Gastrocnemius medialis (tissue), 4 donors: ENCODE measurements at regions of chr7 and their contacts with region 1.

Region 1: DNA sequence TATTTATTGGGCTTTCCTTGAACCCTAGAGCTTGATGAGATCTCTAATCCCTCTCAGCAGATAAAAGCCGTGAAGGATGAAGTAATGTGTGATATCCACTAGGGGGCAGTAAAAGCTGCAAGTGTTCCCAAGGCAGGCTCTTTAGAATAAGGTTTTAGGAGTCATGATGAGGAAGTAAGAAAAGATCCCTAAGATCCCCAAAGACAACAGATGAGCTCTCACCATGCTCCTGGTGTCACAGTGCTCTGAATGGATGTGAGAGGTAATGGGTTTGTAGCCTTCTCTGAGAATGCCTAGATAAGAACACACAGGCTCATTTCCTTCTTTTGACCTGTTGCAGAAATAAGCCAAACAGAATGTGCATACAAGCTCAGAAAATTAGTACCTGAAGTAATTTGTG is 70.4 kb upstream of the ITPRID1 start:
- DNase-seq: no peak
- ATAC-seq: peak in 1 of 2 donors; percentile 53
- H3K4me3 ChIP-seq: no peak overlapping the region
- H3K27ac ChIP-seq: no peak overlapping the region
- H3K4me1 ChIP-seq: no peaks in the 10 kb centered on the region
- H3K27me3 ChIP-seq: no peaks in the 10 kb centered on the region
- CTCF ChIP-seq: peak in 4 of 5 experiments; percentile 23 to 65 (median 52)
- POLR2A ChIP-seq: no peak

Region 2: DNA sequence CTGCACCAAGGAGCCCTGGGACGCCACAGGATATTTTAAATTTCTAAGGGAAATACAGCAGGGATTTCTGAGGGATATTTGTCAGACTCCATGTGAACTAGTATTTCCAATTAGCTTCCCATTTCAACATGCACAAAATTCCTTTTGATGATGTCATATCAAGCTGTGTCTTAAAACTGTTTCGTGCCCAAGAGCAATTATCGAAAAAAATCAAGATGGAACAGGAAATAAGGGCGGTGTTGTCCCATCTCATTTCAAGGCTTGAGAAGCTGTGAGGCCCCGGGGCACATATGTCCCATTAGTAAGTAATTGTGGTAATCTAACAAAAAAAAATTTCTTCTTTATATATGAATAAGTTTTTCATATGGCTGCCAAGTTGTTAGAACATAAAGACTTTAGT is 291.0 kb after region 1 on chr7:
- in situ Hi-C with region 1: no loop called
- intact Hi-C with region 1: loop called (anchors 5 kb)
- DNase-seq: no peak
- ATAC-seq: no peak
- H3K4me3 ChIP-seq: no peak overlapping the region
- H3K27ac ChIP-seq: no peak overlapping the region
- H3K4me1 ChIP-seq: no peaks in the 10 kb centered on the region
- H3K27me3 ChIP-seq: no peaks in the 10 kb centered on the region
- CTCF ChIP-seq: no peak
- POLR2A ChIP-seq: no peak